SK-N-SH (cell line): ENCODE measurements at regions of chr14 and their contacts with region 1.

Region 1: GRCh38 chr14:93655078-93655750 is 133.1 kb downstream of the PRIMA1 start:
- DNase-seq: peak; percentile 56
- H3K4me3 ChIP-seq: peak overlapping the region in 1 of 2 experiments; percentile 44; a peak in 1 of 4 replicates
- H3K27ac ChIP-seq: no peak overlapping the region
- H3K4me1 ChIP-seq: no peaks in the 10 kb centered on the region; a peak in 1 of 4 replicates
- H3K27me3 ChIP-seq: no peaks in the 10 kb centered on the region
- CTCF ChIP-seq: peak; percentile 47
- EP300 ChIP-seq: no peak
- RAD21 ChIP-seq: peak; percentile 90

Region 2: GRCh38 chr14:93481758-93482157 is 173.5 kb before region 1 on chr14:
- CTCF ChIA-PET with region 1: no interaction called
- POLR2A ChIA-PET with region 1: no interaction called
- DNase-seq: no peak
- H3K4me3 ChIP-seq: no peak overlapping the region
- H3K27ac ChIP-seq: no peak overlapping the region
- H3K4me1 ChIP-seq: peaks cover 0 to 3% of the 10 kb centered on the region in 2 experiments; a peak in 2 of 4 replicates
- H3K27me3 ChIP-seq: no peaks in the 10 kb centered on the region
- CTCF ChIP-seq: no peak
- EP300 ChIP-seq: no peak
- RAD21 ChIP-seq: no peak

Region 3: GRCh38 chr14:93525696-93526451 is 129.3 kb before region 1 on chr14:
- CTCF ChIA-PET with region 1: no interaction called
- POLR2A ChIA-PET with region 1: no interaction called
- DNase-seq: no peak
- H3K4me3 ChIP-seq: no peak overlapping the region
- H3K27ac ChIP-seq: no peak overlapping the region
- H3K4me1 ChIP-seq: no peaks in the 10 kb centered on the region; a peak in 1 of 4 replicates
- H3K27me3 ChIP-seq: no peaks in the 10 kb centered on the region
- CTCF ChIP-seq: no peak
- EP300 ChIP-seq: no peak
- RAD21 ChIP-seq: no peak

Region 4: DNA sequence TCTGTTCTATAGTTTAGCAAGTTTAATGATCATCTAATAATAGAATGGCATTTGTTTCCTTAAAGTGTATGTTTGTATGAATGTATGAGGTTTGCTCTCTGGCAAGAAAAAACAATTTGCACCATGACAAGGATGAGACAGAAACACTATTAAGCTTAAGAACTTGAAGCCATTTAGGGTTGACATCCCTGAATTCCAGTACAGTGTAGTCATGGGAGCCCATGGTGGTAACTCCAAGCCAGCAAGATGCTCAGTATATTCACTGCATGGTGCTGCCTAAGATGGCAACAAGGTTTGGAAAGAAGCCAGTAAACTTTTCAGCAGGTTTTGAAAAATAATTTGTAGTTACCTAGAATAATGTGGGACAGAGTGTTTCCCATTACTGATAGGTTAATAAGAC is 25.6 kb before region 1 on chr14:
- CTCF ChIA-PET with region 1: interaction called, 10 read pairs
- POLR2A ChIA-PET with region 1: no interaction called
- DNase-seq: no peak
- H3K4me3 ChIP-seq: no peak overlapping the region
- H3K27ac ChIP-seq: no peak overlapping the region
- H3K4me1 ChIP-seq: no peaks in the 10 kb centered on the region
- H3K27me3 ChIP-seq: no peaks in the 10 kb centered on the region
- CTCF ChIP-seq: no peak
- EP300 ChIP-seq: no peak
- RAD21 ChIP-seq: no peak

Region 5: DNA sequence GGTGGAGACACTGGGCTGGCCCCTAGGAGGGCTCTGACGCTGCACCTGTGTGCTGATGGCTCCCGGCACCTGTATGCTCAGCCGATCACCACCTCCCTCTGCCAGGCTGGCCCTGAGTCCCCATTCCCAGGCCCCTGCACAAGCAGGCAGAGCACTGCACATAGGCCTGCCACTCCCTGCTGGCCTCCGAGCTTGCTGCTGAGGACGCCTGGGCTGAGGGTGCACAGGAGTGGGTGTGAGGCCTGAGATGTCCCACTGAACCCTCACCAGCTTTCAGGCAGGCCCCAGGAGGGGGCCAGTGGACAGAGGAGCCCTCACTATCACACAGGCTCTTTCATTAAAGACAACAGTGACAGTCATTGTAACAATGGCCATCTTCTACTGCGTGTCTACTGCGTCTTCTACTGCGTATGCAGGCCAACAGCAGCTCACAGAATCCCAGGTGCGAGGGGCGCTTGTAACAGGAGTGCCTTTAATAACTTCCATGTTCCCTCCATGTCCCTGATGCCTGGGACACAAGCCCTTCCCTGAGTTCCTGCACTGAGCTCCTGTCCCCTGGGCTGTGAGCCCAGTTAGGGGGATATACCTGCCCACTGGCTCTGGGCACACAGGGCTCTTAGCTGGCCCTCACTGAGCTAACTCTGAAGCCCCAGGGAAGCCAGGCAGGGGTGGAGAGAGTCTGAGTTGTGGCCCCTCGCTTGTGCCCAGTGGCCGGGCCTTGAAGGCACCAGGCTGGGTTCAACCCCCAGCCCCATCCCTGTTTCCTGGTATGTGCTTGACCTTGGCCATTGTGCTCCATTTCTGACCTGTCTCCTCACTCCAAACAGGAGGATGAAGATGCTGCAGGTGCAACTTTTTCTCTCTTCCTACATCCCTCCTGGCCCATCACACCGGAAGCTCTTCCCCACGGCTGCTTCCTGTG is 61.8 kb after region 1 on chr14:
- CTCF ChIA-PET with region 1: interaction called, 10 read pairs
- POLR2A ChIA-PET with region 1: no interaction called
- DNase-seq: peak; percentile 28
- H3K4me3 ChIP-seq: no peak overlapping the region
- H3K27ac ChIP-seq: no peak overlapping the region; a peak in 1 of 4 replicates
- H3K4me1 ChIP-seq: peaks cover 0 to 9% of the 10 kb centered on the region in 2 experiments; a peak in 1 of 4 replicates
- H3K27me3 ChIP-seq: no peaks in the 10 kb centered on the region
- CTCF ChIP-seq: no peak
- EP300 ChIP-seq: no peak
- RAD21 ChIP-seq: no peak

Region 6: GRCh38 chr14:93752635-93753561 is 97.7 kb after region 1 on chr14:
- CTCF ChIA-PET with region 1: interaction called, 13 read pairs
- POLR2A ChIA-PET with region 1: no interaction called
- DNase-seq: peak; percentile 42
- H3K4me3 ChIP-seq: no peak overlapping the region
- H3K27ac ChIP-seq: peak overlapping the region in 1 of 2 experiments; percentile 99; a peak in 2 of 4 replicates
- H3K4me1 ChIP-seq: peaks cover 0 to 50% of the 10 kb centered on the region in 2 experiments; a peak in 1 of 4 replicates
- H3K27me3 ChIP-seq: no peaks in the 10 kb centered on the region
- CTCF ChIP-seq: no peak
- EP300 ChIP-seq: peak in 1 of 2 experiments; percentile 53; a peak in 2 of 4 replicates
- RAD21 ChIP-seq: no peak; the same call in 1 of the 2 replicates

Region 7: GRCh38 chr14:93788543-93789227 is 133.5 kb after region 1 on chr14:
- CTCF ChIA-PET with region 1: interaction called, 127 read pairs
- POLR2A ChIA-PET with region 1: interaction called, 4 read pairs
- DNase-seq: peak; percentile 90
- H3K4me3 ChIP-seq: peak overlapping the region in 1 of 2 experiments; percentile 48; a peak in 2 of 4 replicates
- H3K27ac ChIP-seq: peak overlapping the region in 1 of 2 experiments; percentile 91; a peak in 2 of 4 replicates
- H3K4me1 ChIP-seq: peaks cover 0 to 53% of the 10 kb centered on the region in 2 experiments; a peak in 2 of 4 replicates
- H3K27me3 ChIP-seq: no peaks in the 10 kb centered on the region
- CTCF ChIP-seq: no peak
- EP300 ChIP-seq: no peak; a peak in 1 of 4 replicates
- RAD21 ChIP-seq: peak; percentile 71

Region 8: GRCh38 chr14:93912782-93913181 is 257.6 kb after region 1 on chr14:
- CTCF ChIA-PET with region 1: interaction called, 349 read pairs
- POLR2A ChIA-PET with region 1: no interaction called
- DNase-seq: no peak
- H3K4me3 ChIP-seq: no peak overlapping the region
- H3K27ac ChIP-seq: no peak overlapping the region
- H3K4me1 ChIP-seq: no peaks in the 10 kb centered on the region
- H3K27me3 ChIP-seq: no peaks in the 10 kb centered on the region
- CTCF ChIP-seq: no peak
- EP300 ChIP-seq: no peak
- RAD21 ChIP-seq: no peak